PC-3 (cell line): ENCODE measurements at regions of chr1 and their contacts with region 1.

Region 1: DNA sequence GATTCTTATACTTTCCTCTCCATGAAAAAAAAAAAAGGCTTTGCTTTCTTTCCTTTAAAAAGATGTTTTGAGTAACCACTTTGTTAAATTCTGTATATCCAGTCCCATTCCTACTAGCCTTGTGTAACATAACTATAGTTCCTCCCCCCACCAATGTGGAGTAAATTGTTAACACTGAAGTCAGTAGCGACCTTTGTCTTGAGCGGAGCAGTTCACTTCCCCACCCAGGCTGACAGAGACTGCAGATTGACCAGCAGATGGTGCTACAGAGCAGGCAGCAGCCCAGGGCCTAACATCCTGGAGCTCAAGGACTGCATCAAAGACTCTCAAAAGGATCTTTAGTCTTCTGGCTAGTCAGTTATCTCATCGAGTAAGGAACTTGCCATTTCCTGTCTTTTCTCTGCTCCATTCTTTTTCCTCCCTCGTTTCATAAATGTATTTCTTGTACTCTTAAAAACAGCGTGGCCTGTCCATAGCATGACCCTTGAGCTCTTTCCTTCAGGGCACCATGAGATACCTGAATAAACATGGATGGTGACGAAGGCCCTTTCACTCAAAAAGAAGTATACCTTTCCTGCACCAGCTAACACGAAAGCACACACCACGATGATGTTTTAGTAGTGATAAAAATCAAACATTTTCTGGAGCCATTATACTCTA is 503.5 kb upstream of the PKN2 start:
- DNase-seq: peak; percentile 85
- ATAC-seq: peak; percentile 98
- H3K4me3 ChIP-seq: no peak overlapping the region
- H3K27ac ChIP-seq: no peak overlapping the region
- H3K4me1 ChIP-seq: peaks cover 6% of the 10 kb centered on the region
- H3K27me3 ChIP-seq: no peaks in the 10 kb centered on the region
- CTCF ChIP-seq: peak; percentile 96

Region 2: GRCh38 chr1:87292684-87293493 is 887.7 kb before region 1 on chr1:
- CTCF ChIA-PET with region 1: no interaction called
- POLR2A ChIA-PET with region 1: no interaction called
- intact Hi-C with region 1: loop called (anchors 10 kb)
- DNase-seq: peak; percentile 75
- ATAC-seq: peak; percentile 70
- H3K4me3 ChIP-seq: no peak overlapping the region
- H3K27ac ChIP-seq: no peak overlapping the region
- H3K4me1 ChIP-seq: no peaks in the 10 kb centered on the region
- H3K27me3 ChIP-seq: no peaks in the 10 kb centered on the region
- CTCF ChIP-seq: peak; percentile 91

Region 3: GRCh38 chr1:88104236-88104635 is 76.3 kb before region 1 on chr1:
- CTCF ChIA-PET with region 1: no interaction called
- POLR2A ChIA-PET with region 1: no interaction called
- intact Hi-C with region 1: no loop called
- DNase-seq: no peak
- ATAC-seq: no peak
- H3K4me3 ChIP-seq: no peak overlapping the region
- H3K27ac ChIP-seq: no peak overlapping the region
- H3K4me1 ChIP-seq: no peaks in the 10 kb centered on the region
- H3K27me3 ChIP-seq: no peaks in the 10 kb centered on the region
- CTCF ChIP-seq: no peak

Region 4: DNA sequence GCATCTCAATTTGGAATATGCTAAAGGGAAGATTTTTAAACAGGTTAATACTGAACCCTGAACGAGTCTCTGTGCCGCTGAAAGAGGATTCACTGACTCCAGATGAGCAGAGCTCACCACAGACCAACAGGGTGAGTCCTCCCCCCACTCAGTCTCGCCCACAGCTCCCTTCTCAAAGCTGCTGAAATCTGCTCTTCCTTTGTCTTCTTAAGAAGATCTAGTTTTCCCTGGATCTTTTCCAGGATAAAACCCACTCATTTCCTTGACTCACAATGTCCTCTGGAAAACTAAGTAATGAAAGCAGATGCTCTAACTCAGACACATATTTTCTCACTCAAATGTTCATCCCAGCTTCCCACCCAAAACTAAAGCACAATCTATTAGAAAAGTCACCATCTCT is 56.5 kb after region 1 on chr1:
- CTCF ChIA-PET with region 1: interaction called, 16 read pairs
- POLR2A ChIA-PET with region 1: no interaction called
- intact Hi-C with region 1: loop called (anchors 5 kb)
- DNase-seq: no peak
- ATAC-seq: no peak
- H3K4me3 ChIP-seq: no peak overlapping the region
- H3K27ac ChIP-seq: no peak overlapping the region
- H3K4me1 ChIP-seq: no peaks in the 10 kb centered on the region
- H3K27me3 ChIP-seq: no peaks in the 10 kb centered on the region
- CTCF ChIP-seq: no peak

Region 5: GRCh38 chr1:88302843-88303486 is 122.4 kb after region 1 on chr1:
- CTCF ChIA-PET with region 1: no interaction called
- POLR2A ChIA-PET with region 1: no interaction called
- intact Hi-C with region 1: loop called (anchors 1 kb)
- DNase-seq: peak; percentile 51
- ATAC-seq: peak; percentile 62; the same call in 1 of the 2 replicates
- H3K4me3 ChIP-seq: no peak overlapping the region
- H3K27ac ChIP-seq: no peak overlapping the region
- H3K4me1 ChIP-seq: no peaks in the 10 kb centered on the region
- H3K27me3 ChIP-seq: no peaks in the 10 kb centered on the region
- CTCF ChIP-seq: peak; percentile 65